ENCODE measurements at regions of chr11 and their contacts with region 1.

Region 1: GRCh38 chr11:14907411-14908213 is 15.6 kb upstream of the CYP2R1 start:
- DNase-seq: peak; percentile 65
- ATAC-seq: peak; percentile 92
- H3K4me3 ChIP-seq: 0 out of 2 replicates have a peak overlapping the region, but pooled peaks have one; percentile 21
- H3K27ac ChIP-seq: no peak overlapping the region
- H3K4me1 ChIP-seq: no peaks in the 10 kb centered on the region
- H3K27me3 ChIP-seq: peaks cover 15% of the 10 kb centered on the region; the same call in 1 of the 2 replicates
- CTCF ChIP-seq: peak; percentile 84

Region 2: DNA sequence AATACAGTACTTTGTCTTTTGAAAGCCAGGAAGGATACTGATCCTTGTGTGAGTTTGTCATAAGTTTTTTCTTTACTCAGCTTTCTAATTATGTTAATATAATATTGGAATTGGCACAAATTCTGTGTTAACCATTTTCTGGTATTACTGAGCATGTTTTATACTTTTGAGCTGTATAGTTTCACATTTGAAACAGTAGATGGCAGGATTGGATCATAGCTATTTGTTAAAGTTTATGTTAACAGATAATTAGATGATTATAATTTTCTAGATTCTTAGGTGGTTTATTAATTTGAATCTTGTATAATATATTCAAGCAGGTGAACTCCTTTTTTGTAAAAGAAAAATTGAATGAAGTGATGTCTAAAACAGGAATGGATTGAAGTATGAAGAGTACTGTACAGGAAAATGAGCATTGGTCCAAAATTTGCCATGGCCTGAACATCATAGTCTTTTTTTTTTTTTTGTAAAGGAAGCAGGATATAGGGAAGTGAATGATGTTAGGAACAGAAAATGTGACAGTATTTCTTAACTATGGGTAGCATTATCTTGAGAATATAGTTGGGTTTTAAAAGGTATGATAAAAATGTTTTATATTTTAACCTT is 117.6 kb before region 1 on chr11:
- CTCF ChIA-PET with region 1: interaction called, 69 read pairs
- POLR2A ChIA-PET with region 1: no interaction called
- intact Hi-C with region 1: loop called (anchors 1 kb)
- DNase-seq: peak; percentile 36
- ATAC-seq: no peak
- H3K4me3 ChIP-seq: no peak overlapping the region
- H3K27ac ChIP-seq: no peak overlapping the region
- H3K4me1 ChIP-seq: no peaks in the 10 kb centered on the region
- H3K27me3 ChIP-seq: peaks cover under 1% of the 10 kb centered on the region; the same call in 1 of the 2 replicates
- CTCF ChIP-seq: peak; percentile 69

Region 3: DNA sequence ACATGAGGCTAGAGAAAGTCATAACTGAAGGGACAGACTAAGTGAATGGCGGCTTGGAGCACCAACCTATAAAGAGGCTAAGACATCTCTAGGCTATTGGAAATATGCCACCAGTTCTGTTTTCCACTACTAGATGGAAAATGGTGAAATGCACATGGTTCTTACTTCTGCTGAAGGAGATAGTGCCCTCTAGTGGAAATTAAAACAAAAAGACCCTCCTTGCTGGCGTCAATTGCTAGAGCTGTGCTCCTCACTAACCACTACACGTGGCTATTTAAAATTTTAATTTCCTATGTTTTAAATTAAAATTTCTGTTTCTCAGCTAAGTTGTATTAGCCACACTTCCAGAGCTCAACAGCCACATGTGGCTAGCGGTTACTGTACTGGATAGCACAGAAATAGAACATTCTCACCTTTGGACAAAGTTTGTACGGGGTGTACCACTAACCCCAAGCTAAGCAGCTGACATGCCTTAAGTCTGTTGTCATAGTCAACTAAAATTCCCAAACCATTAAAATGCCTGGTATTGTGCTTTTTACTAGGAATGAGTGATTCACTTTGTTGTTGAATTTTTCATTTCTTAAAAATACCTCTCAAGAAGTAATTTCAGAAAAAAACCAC is 98.6 kb after region 1 on chr11:
- CTCF ChIA-PET with region 1: interaction called, 7 read pairs
- POLR2A ChIA-PET with region 1: no interaction called
- intact Hi-C with region 1: loop called (anchors 1 kb)
- DNase-seq: peak; percentile 55
- ATAC-seq: peak; percentile 40; the same call in 1 of the 2 replicates
- H3K4me3 ChIP-seq: no peak overlapping the region
- H3K27ac ChIP-seq: no peak overlapping the region
- H3K4me1 ChIP-seq: no peaks in the 10 kb centered on the region
- H3K27me3 ChIP-seq: no peaks in the 10 kb centered on the region
- CTCF ChIP-seq: peak; percentile 56

Region 4: DNA sequence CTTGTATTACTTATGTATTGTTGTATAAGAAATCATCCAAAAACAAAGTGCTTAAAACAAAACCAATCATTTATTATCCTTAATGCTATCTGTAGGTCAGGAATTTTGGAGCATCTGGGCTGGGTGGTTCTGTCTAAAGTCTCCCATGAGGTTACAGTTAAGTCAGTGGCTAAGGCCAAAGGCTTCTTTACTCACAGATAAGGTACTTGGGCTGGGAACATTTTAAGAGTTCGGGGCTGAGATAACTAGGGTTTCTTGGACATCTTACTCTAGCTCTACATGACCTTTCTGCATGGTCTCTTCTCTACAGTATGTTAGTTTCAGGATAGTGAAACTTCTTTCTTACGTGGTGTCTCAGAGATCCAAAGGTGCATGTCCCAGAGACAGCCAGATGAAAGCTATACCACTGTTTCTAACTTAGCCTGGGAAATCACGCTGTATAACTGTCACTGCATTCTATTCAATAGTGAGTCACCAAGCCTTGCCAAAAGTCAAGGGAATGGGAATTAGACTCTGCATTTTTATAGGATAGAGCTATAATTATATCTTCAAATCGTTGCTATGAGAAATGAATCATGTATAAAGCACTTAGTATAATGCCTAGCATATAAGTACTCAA is 1419.2 kb after region 1 on chr11:
- CTCF ChIA-PET with region 1: no interaction called
- POLR2A ChIA-PET with region 1: no interaction called
- intact Hi-C with region 1: no loop called
- DNase-seq: no peak
- ATAC-seq: no peak
- H3K4me3 ChIP-seq: no peak overlapping the region
- H3K27ac ChIP-seq: no peak overlapping the region
- H3K4me1 ChIP-seq: no peaks in the 10 kb centered on the region
- H3K27me3 ChIP-seq: no peaks in the 10 kb centered on the region
- CTCF ChIP-seq: no peak

Region 5: DNA sequence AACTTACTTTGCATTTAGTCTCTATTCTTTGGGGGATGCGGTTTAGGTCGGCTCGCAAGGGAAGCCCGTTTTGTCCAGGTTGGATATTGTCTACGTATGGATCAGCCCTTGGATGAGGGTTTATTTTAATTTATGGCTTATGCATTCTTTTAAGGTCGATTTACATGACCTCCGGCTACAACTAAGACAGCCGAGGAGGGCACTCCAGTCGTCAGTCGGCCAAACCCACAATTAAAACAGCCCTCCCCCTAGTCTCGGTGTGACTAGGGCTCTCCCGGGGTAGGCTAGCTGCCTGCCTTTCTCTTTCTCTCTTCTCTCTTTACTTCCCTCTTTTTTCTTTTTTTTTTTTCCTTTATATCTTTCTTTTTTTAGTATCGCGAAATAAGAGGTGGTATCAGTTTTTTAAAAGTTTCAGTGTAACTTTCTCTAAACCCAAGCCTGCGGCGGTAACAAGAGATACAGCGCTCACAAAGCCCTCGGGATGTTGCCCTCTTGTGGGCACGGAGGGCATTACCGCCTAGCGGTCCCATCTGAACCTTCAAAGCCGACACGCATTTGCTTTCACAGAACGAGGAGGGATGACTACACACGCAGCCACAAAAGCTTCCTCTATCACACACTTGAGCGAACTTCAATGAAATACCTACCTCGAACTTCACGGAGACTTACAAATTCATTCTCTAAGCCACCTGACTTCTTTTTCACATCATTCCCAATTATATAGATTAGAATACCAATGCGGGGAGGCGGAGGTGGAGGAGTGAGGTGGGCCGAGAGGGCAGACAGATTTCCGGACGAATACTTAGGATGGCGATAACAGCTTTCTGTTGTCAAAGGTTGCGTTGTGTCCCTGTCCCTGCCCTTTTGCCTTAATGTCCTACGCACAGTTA is 1698.5 kb after region 1 on chr11:
- CTCF ChIA-PET with region 1: no interaction called
- POLR2A ChIA-PET with region 1: no interaction called
- intact Hi-C with region 1: loop called (anchors 1 kb)
- DNase-seq: peak; percentile 88
- ATAC-seq: peak; percentile 84
- H3K4me3 ChIP-seq: peak overlapping the region; percentile 58
- H3K27ac ChIP-seq: no peak overlapping the region
- H3K4me1 ChIP-seq: peaks cover 8% of the 10 kb centered on the region; the same call in 1 of the 2 replicates
- H3K27me3 ChIP-seq: peaks cover 78% of the 10 kb centered on the region
- CTCF ChIP-seq: peak; percentile 85